Activated T-helper 1 cell treated with anti-CD3 and anti-CD28 coated beads, Interleukin-12 subunit alpha, Interleukin-12 subunit beta, Interleukin-2, Interleukin-4 antibody, amounts not matched to agents 30 ng/mL and 10 ng/mL and 1 ng/mL, durations not matched to agents 14 hours and 24 hours and 36 hours (primary cell): ENCODE measurements at regions of chr7 and their contacts with region 1.

Region 1: GRCh38 chr7:151351027-151351426 is 9.4 kb downstream of the NUB1 start:
- DNase-seq: no peak
- H3K4me3 Mint-ChIP-seq: peak overlapping the region; percentile 65
- H3K27ac Mint-ChIP-seq: peak overlapping the region; percentile 93
- H3K4me1 Mint-ChIP-seq: peaks cover 39% of the 10 kb centered on the region
- H3K27me3 Mint-ChIP-seq: no peaks in the 10 kb centered on the region

Region 2: DNA sequence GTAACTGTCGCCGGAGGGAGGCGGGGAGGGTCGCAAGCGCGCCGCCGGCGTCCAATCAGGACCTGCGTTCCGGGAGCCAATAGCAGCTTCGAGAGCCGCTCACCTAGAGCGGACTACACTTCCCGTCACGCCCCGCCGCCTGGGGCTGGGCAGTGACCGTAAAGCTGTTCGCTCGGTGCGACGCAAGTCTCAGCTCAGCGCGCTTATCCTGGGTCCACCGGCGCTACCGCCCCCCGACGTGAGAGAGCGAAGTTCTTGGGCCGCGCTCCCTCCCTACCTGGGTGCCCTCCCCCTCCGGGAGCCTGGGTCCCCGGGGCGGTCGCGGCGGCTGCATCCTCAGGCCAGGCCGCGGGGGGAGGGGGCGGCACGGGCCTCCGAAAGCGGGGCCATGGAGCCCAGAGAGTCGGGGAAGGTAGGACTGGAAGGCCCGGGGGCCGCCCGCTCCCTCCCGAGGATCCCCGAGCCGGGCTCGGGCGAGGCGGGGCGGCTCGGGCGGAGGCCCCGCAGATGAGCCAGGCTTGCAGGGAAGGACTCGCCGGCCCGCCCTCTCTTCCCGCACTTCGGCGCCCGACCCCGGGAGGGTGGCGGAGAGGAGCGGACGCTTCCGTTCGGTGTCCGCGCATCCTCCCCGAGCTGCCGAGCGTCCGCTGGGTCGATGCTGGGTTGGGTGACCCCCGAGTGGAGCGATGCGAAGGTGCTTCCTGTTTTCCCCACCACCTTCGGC is 1512.6 kb before region 1 on chr7 and contains the start of gene ZNF862:
- intact Hi-C with region 1: loop called (anchors 2 kb)
- DNase-seq: peak; percentile 95
- H3K4me3 Mint-ChIP-seq: peak within 1 kb of the TSS; percentile 89
- H3K27ac Mint-ChIP-seq: peak within 1 kb of the TSS; percentile 75
- H3K4me1 Mint-ChIP-seq: peaks cover 25% of the 10 kb centered on the region
- H3K27me3 Mint-ChIP-seq: peaks cover 9% of the 10 kb centered on the region
- total RNA-seq, gene ZNF862: 14.2 and 19.3 TPM in 2 replicates

Region 3: GRCh38 chr7:151232091-151232916 is 118.7 kb before region 1 on chr7 and contains the start of gene CHPF2:
- intact Hi-C with region 1: loop called (anchors 1 kb)
- DNase-seq: peak; percentile 89
- H3K4me3 Mint-ChIP-seq: peak within 1 kb of the TSS; percentile 100
- H3K27ac Mint-ChIP-seq: peak within 1 kb of the TSS; percentile 98
- H3K4me1 Mint-ChIP-seq: peaks cover 35% of the 10 kb centered on the region
- H3K27me3 Mint-ChIP-seq: peaks cover 2% of the 10 kb centered on the region
- total RNA-seq, gene CHPF2: 45.6 and 48.5 TPM in 2 replicates

Region 4: GRCh38 chr7:151315038-151315655 is 35.9 kb before region 1 on chr7:
- intact Hi-C with region 1: loop called (anchors 1 kb)
- DNase-seq: peak; percentile 68
- H3K4me3 Mint-ChIP-seq: no peak overlapping the region
- H3K27ac Mint-ChIP-seq: no peak overlapping the region
- H3K4me1 Mint-ChIP-seq: peaks cover 9% of the 10 kb centered on the region
- H3K27me3 Mint-ChIP-seq: no peaks in the 10 kb centered on the region

Region 5: GRCh38 chr7:151519765-151520418 is 168.9 kb after region 1 on chr7 and contains the start of gene RHEB:
- intact Hi-C with region 1: loop called (anchors 1 kb)
- DNase-seq: peak; percentile 97
- H3K4me3 Mint-ChIP-seq: peak within 1 kb of the TSS; percentile 94
- H3K27ac Mint-ChIP-seq: peak within 1 kb of the TSS; percentile 99
- H3K4me1 Mint-ChIP-seq: peaks cover 32% of the 10 kb centered on the region
- H3K27me3 Mint-ChIP-seq: peaks cover 10% of the 10 kb centered on the region
- total RNA-seq, gene RHEB: 62.5 and 65.5 TPM in 2 replicates

Region 6: GRCh38 chr7:152675759-152676636 is 1325.0 kb after region 1 on chr7 and contains the start of gene XRCC2:
- intact Hi-C with region 1: loop called (anchors 5 kb)
- DNase-seq: peak; percentile 94
- H3K4me3 Mint-ChIP-seq: peak within 1 kb of the TSS; percentile 92
- H3K27ac Mint-ChIP-seq: peak within 1 kb of the TSS; percentile 95
- H3K4me1 Mint-ChIP-seq: peaks cover 25% of the 10 kb centered on the region
- H3K27me3 Mint-ChIP-seq: no peaks in the 10 kb centered on the region
- total RNA-seq, gene XRCC2: 24.0 and 24.5 TPM in 2 replicates